Right cardiac atrium (tissue), 5 donors: ENCODE measurements at regions of chr7 and their contacts with region 1.

Region 1: DNA sequence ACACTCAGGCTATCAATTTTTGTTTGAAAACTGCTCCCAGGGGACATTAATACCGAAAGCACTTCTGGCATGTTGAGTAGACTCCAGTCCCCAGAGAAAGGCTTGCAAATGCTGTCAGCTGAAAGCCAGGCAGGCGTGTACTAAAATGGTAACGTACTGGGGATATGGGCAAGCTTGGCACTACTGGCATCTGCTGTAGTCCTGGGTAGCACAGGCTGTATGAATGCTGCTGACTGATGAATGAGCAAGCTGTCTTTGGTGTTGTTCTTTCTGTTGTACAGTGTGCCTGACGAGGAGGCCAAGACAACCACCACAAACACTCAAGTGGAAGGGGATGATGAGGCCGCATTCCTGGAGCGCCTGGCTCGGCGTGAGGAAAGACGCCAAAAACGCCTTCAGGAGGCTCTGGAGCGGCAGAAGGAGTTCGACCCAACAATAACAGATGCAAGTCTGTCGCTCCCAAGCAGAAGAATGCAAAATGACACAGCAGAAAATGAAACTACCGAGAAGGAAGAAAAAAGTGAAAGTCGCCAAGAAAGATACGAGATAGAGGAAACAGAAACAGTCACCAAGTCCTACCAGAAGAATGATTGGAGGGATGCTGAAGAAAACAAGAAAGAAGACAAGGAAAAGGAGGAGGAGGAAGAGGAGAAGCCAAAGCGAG is 53.5 kb upstream of the AGBL3 start:
- DNase-seq: peak; percentile 72 to 87 (median 83)
- ATAC-seq: peak; percentile 88
- H3K4me3 ChIP-seq: no peak overlapping the region
- H3K27ac ChIP-seq: peak overlapping the region; percentile 96
- H3K4me1 ChIP-seq: peaks cover 20% of the 10 kb centered on the region
- H3K27me3 ChIP-seq: no peaks in the 10 kb centered on the region

Region 2: GRCh38 chr7:134605973-134606923 is 326.6 kb before region 1 on chr7:
- intact Hi-C with region 1: no loop called
- DNase-seq: peak; percentile 56 to 81 (median 75)
- ATAC-seq: peak; percentile 92 to 93
- H3K4me3 ChIP-seq: no peak overlapping the region
- H3K27ac ChIP-seq: no peak overlapping the region
- H3K4me1 ChIP-seq: no peaks in the 10 kb centered on the region
- H3K27me3 ChIP-seq: no peaks in the 10 kb centered on the region

Region 3: DNA sequence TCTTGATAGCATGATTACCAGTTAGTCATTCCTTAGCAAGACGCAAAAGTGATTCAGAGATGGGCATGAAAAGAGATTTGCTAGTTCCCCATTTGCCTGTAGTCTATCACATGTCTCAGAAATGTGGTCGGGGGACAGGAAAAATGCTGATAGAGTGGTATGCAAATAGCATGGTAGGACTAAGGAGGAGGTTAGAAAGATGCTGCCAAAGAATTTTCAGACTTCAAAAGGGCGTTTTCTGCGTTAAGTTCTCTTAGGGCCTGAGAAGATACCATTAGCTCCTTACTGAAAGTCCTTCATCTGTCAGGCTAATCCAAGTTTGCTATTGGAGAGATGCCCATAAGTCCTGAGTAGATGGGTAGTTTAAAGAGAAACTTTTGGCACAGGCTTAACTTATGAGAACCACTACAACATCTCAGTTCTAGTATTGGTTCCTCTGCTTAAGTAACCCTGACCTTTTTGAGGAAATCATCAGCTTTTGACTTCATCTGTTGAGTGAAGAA is 150.7 kb before region 1 on chr7:
- intact Hi-C with region 1: loop called in 1 of 4 experiments (anchors 10 kb)
- DNase-seq: no peak
- ATAC-seq: no peak
- H3K4me3 ChIP-seq: peak overlapping the region; percentile 100
- H3K27ac ChIP-seq: no peak overlapping the region
- H3K4me1 ChIP-seq: peaks cover 12% of the 10 kb centered on the region
- H3K27me3 ChIP-seq: no peaks in the 10 kb centered on the region

Region 4: DNA sequence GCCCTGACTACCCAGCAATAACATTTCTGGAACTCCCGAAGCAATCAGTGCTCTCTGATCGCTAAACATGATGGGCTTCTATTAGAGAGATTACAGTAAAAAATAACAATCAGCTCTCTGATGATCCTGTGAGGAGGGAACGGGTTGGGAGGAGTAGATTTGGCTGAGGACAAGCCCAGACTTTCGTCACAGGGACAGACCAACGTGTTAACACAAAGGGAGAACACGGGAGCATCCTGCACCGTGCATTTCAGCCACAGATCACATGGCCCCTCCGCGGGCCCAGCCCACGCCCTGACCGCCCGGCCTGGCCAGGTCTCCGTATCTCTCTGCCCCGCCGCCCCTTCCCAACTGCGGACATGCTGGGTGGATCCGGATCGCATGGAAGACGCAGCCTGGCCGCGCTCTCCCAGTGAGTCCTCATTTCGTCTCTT is 41.6 kb before region 1 on chr7:
- intact Hi-C with region 1: loop called in 2 of 4 experiments (anchors 5 to 10 kb)
- DNase-seq: peak; percentile 86 to 91 (median 91)
- ATAC-seq: peak; percentile 93 to 94
- H3K4me3 ChIP-seq: peak overlapping the region; percentile 67
- H3K27ac ChIP-seq: peak overlapping the region; percentile 89
- H3K4me1 ChIP-seq: peaks cover 9% of the 10 kb centered on the region
- H3K27me3 ChIP-seq: no peaks in the 10 kb centered on the region